CD4-positive, alpha-beta memory T cell (primary cell): ENCODE measurements at regions of chr13 and their contacts with region 1.

Region 1: GRCh38 chr13:51832471-51833152 is 12.4 kb downstream of the TMEM272 start:
- DNase-seq: peak; percentile 72 to 78 (median 73)
- H3K4me3 ChIP-seq: no peak overlapping the region
- H3K4me3 Mint-ChIP-seq: peak overlapping the region in 7 of 8 donors; percentile 6 to 67 (median 44)
- H3K27ac ChIP-seq: no peak overlapping the region
- H3K27ac Mint-ChIP-seq: peak overlapping the region; percentile 6 to 85 (median 66)
- H3K4me1 ChIP-seq: peaks cover 18% of the 10 kb centered on the region
- H3K4me1 Mint-ChIP-seq: peaks cover 16 to 43% (median 34%) of the 10 kb centered on the region in 4 donors
- H3K27me3 ChIP-seq: no peaks in the 10 kb centered on the region
- H3K27me3 Mint-ChIP-seq: no peaks in the 10 kb centered on the region

Region 2: DNA sequence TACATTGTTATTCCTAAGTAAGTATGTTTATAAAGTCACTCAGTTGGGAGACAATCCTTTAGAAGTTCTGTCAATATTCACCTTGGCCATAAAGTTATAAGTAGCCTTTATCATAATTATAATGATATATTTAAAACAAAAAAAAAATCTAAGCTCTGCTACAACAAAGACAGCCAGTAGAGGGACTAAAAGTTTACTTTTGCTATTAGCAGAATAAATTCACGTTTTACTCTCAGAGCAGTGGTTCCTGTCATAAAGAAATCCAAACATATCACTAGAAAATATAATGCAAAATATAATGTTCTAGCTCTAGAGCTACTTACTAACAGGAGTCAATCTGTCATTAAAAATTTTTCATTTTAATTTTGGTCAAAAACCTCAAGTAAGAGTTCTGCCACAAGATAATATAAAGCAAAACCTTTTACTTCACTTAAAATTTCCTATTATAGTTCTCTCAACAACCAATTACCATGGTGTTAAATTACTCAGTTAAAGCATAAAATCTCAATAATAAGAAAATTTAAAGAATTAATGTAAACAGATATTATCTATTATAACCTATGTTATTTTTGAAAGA is 397.5 kb before region 1 on chr13:
- CTCF ChIA-PET with region 1: interaction called, 16 read pairs
- POLR2A ChIA-PET with region 1: no interaction called
- intact Hi-C with region 1: no loop called
- DNase-seq: peak in 4 of 5 donors; percentile 35 to 43 (median 42)
- H3K4me3 ChIP-seq: no peak overlapping the region
- H3K4me3 Mint-ChIP-seq: no peak overlapping the region
- H3K27ac ChIP-seq: no peak overlapping the region
- H3K27ac Mint-ChIP-seq: no peak overlapping the region
- H3K4me1 ChIP-seq: peaks cover 13% of the 10 kb centered on the region
- H3K4me1 Mint-ChIP-seq: peaks cover 12 to 20% (median 16%) of the 10 kb centered on the region in 4 donors
- H3K27me3 ChIP-seq: no peaks in the 10 kb centered on the region
- H3K27me3 Mint-ChIP-seq: no peaks in the 10 kb centered on the region

Region 3: DNA sequence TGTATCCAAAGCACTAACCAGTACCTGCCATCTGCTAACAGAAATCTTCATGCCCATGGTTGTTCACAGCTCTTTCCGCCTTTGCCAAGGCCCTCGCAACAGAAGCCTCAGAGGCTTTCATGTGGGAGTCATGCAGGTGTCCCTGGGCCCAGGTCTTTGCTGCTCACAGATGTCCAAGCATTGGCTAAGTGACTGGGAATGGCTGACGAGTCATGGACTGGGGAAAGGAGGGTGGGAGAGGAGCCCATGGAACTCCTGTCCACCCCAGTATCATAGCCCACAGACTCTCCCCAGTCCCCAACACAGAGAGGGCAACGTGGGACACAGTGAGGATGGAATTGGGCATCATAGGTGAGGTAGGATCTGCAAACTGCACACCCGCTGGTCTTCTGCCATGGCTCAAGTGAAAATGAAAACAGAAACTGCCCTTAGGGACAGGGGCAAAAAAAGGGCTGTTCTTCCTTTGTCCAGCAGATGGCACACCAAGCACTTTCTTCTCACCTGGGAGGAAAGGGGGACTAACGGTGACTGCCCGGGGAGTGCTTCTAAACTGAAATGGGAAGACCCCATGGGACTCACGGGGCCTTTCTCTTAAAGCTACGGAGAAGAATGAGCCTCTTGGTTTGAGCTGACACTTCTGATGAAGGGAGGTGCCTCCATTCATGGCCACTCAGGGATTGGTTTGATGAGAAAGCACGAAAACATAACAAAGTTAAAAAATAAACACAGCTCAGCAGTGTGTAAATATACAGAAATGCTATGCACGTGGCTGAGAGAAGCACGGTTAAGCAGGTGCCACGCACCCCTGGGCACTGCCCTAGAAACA is 17.6 kb before region 1 on chr13:
- CTCF ChIA-PET with region 1: interaction called, 442 read pairs
- POLR2A ChIA-PET with region 1: interaction called, 288 read pairs
- intact Hi-C with region 1: loop called (anchors 1 kb)
- DNase-seq: peak; percentile 74 to 79 (median 77)
- H3K4me3 ChIP-seq: peak overlapping the region in 1 of 2 donors; percentile 12
- H3K4me3 Mint-ChIP-seq: peak overlapping the region; percentile 52 to 83 (median 70)
- H3K27ac ChIP-seq: peak overlapping the region; percentile 43
- H3K27ac Mint-ChIP-seq: peak overlapping the region; percentile 78 to 97 (median 90)
- H3K4me1 ChIP-seq: peaks cover 62% of the 10 kb centered on the region
- H3K4me1 Mint-ChIP-seq: peaks cover 47 to 85% (median 64%) of the 10 kb centered on the region in 4 donors
- H3K27me3 ChIP-seq: no peaks in the 10 kb centered on the region
- H3K27me3 Mint-ChIP-seq: no peaks in the 10 kb centered on the region

Region 4: GRCh38 chr13:51844862-51845573 is 12.4 kb after region 1 on chr13 and contains the start of gene TMEM272:
- CTCF ChIA-PET with region 1: interaction called, 11 read pairs
- POLR2A ChIA-PET with region 1: no interaction called
- intact Hi-C with region 1: no loop called
- DNase-seq: peak in 4 of 5 donors; percentile 36 to 57 (median 48)
- H3K4me3 ChIP-seq: no peak within 1 kb of the TSS
- H3K4me3 Mint-ChIP-seq: peak within 1 kb of the TSS in 4 of 8 donors; percentile 9 to 70 (median 54)
- H3K27ac ChIP-seq: no peak within 1 kb of the TSS
- H3K27ac Mint-ChIP-seq: peak within 1 kb of the TSS in 2 of 7 donors; percentile 48 to 62
- H3K4me1 ChIP-seq: no peaks in the 10 kb centered on the region
- H3K4me1 Mint-ChIP-seq: peaks cover 4 to 10% (median 8%) of the 10 kb centered on the region in 4 donors
- H3K27me3 ChIP-seq: no peaks in the 10 kb centered on the region
- H3K27me3 Mint-ChIP-seq: peaks cover 2 to 3% of the 10 kb centered on the region in 2 donors
- total RNA-seq, gene TMEM272: 7.9 to 9.0 TPM